Activated CD8-positive, alpha-beta memory T cell treated with anti-CD3 and anti-CD28 coated beads, Interleukin-2, amount 10 ng/mL, durations not matched to agents 7 days and 5 days (primary cell): ENCODE measurements at regions of chr5 and their contacts with region 1.

Region 1: DNA sequence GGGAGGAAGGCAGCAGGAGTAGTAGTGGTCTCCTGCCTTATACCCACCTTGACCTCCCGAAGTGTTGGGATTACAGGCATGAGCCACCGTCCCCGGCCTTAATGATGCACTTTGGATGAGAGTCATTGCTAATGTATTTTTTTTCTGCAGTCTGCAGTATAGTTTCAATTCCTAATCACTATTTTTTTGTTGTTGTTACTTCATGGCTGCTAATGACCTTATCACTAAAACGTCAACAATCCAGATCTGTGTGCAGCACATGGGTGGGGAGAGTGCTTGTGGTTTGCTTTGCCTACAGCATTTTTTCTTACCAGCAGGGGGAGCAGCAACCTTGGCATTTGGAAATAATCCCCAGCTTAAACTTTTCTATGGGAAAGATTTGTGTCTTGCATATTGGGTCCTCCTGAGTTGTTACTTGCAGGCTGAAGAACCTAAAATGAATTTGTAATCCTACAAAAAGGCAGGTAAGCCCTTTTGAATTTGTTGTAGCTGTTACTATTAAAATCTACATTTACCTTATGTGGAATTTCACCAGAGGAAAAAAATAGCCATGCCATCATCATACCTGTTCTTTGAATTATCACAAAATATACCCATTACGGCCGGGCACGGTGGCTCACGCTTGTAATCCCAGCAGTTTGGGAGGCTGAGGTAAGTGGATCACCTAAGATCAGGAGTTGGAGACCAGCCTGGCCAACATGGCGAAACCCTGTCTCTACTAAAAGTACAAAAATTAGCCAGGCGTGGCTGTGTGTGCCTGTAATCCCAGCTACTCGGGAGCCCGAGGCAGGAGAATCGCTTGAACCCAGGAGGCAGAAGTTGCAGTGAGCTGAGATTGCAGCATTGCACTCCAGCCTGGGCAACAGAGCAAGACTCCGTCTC is 6.3 kb upstream of the MED7 start:
- DNase-seq: peak; percentile 87
- ATAC-seq: peak; percentile 85
- H3K4me3 Mint-ChIP-seq: no peak overlapping the region
- H3K27ac Mint-ChIP-seq: peak overlapping the region; percentile 16
- H3K4me1 Mint-ChIP-seq: peaks cover 44% of the 10 kb centered on the region
- H3K27me3 Mint-ChIP-seq: no peaks in the 10 kb centered on the region

Region 2: GRCh38 chr5:157180374-157181264 is 31.6 kb after region 1 on chr5 and contains the start of gene ITK:
- CTCF ChIA-PET with region 1: interaction called, 28 read pairs
- DNase-seq: peak; percentile 77
- ATAC-seq: peak; percentile 78
- H3K4me3 Mint-ChIP-seq: peak within 1 kb of the TSS; percentile 96
- H3K27ac Mint-ChIP-seq: peak within 1 kb of the TSS; percentile 99
- H3K4me1 Mint-ChIP-seq: peaks cover 47% of the 10 kb centered on the region
- H3K27me3 Mint-ChIP-seq: no peaks in the 10 kb centered on the region
- total RNA-seq, gene ITK: 209 to 215 TPM

Region 3: GRCh38 chr5:157219491-157220271 is 70.7 kb after region 1 on chr5:
- CTCF ChIA-PET with region 1: interaction called, 29 read pairs
- DNase-seq: peak; percentile 60
- ATAC-seq: peak; percentile 43
- H3K4me3 Mint-ChIP-seq: peak overlapping the region; percentile 6
- H3K27ac Mint-ChIP-seq: peak overlapping the region; percentile 92
- H3K4me1 Mint-ChIP-seq: peaks cover 92% of the 10 kb centered on the region
- H3K27me3 Mint-ChIP-seq: no peaks in the 10 kb centered on the region

Region 4: DNA sequence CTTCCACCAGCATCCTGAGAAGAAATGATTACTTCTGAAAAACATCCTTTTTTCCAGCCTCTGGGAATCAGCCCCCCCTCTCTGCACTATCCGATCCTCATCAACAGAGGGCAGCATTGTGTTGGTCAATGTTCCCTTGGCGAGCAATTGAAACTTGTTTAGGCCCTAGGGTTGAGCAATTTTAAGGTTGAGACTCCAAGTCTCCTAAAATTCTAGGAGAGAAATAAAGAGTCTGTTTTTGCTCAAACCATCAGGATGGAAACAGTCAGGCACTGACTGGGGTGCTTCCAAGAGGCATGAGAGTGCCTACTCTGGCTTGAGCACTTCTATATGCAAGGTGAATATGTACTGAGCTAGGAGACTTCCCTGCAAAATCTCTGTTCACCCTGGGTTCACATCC is 104.6 kb after region 1 on chr5:
- CTCF ChIA-PET with region 1: interaction called, 13 read pairs
- DNase-seq: no peak
- ATAC-seq: peak; percentile 0
- H3K4me3 Mint-ChIP-seq: peak overlapping the region; percentile 53
- H3K27ac Mint-ChIP-seq: peak overlapping the region; percentile 94
- H3K4me1 Mint-ChIP-seq: peaks cover 88% of the 10 kb centered on the region
- H3K27me3 Mint-ChIP-seq: no peaks in the 10 kb centered on the region

Region 5: DNA sequence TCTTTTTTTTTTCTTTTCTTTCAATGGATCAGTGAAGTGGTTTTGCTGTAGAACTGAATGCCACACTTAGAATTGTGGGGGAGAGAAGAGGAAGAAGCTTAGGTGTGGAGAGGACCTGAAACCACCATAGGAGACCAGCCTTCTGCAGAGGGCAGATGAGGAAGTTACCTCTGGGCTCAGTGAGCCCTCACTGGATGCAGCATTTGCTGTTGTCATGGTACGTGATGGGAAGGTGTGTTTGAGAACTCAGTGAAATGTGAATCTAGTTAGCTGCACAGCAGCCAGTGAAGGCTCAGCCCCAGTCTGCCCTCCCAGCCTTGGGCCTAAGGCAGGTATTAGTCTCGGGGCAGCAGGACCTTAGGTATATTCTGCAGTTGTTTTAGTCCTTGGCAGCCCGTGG is 134.5 kb after region 1 on chr5:
- CTCF ChIA-PET with region 1: no interaction called
- DNase-seq: no peak
- ATAC-seq: peak; percentile 84
- H3K4me3 Mint-ChIP-seq: no peak overlapping the region
- H3K27ac Mint-ChIP-seq: peak overlapping the region; percentile 78
- H3K4me1 Mint-ChIP-seq: peaks cover 69% of the 10 kb centered on the region
- H3K27me3 Mint-ChIP-seq: no peaks in the 10 kb centered on the region

Region 6: GRCh38 chr5:157312492-157312891 is 163.5 kb after region 1 on chr5:
- CTCF ChIA-PET with region 1: interaction called, 10 read pairs
- DNase-seq: peak; percentile 73
- ATAC-seq: peak; percentile 90
- H3K4me3 Mint-ChIP-seq: no peak overlapping the region
- H3K27ac Mint-ChIP-seq: peak overlapping the region; percentile 58
- H3K4me1 Mint-ChIP-seq: peaks cover 21% of the 10 kb centered on the region
- H3K27me3 Mint-ChIP-seq: no peaks in the 10 kb centered on the region

Region 7: DNA sequence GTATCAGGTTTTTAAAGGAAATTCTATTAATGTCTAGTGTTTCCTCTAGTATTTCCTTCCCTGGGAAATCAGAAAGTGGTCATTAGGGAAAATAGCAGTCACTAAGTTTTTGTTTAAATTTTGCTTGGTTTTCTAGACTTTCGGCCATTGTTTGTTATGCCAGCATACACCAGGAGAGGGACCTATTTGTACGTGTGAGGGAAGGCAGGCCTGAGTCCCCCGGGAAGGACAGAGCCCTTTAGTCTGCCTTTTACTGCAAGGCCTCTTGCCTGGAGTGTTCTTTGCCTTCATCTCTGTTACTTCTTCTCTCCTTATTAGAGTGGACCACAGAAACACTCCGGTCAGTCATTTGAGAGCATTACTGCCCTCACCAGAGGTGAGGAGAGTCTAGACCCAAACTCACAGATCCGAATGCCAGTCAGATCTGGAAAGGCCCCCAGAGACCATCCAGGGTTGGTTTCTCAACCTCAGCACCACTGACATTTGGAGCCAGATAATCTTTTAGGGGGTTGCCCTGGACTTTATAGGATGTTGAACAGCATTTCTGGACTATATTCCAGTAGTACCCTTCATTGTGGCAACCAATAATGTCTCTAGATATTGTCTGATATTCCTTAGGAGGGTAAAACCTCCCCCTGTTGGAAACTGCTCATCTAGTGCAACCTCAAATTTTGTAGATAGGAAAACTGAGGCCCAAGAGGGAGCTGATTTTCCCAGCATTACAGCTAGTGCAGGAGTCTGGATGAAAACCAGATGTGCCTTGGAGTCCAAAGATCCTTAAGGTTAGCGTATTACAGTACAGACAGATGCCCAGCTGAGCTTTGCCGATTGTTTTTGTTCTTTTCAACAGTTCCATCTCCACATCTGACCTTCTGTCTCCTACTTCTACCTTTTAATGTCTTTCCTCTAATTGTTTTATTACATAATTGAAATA is 218.0 kb after region 1 on chr5:
- CTCF ChIA-PET with region 1: no interaction called
- DNase-seq: no peak
- ATAC-seq: no peak
- H3K4me3 Mint-ChIP-seq: no peak overlapping the region
- H3K27ac Mint-ChIP-seq: no peak overlapping the region
- H3K4me1 Mint-ChIP-seq: peaks cover 6% of the 10 kb centered on the region
- H3K27me3 Mint-ChIP-seq: no peaks in the 10 kb centered on the region